Heart left ventricle (tissue), 16 donors: ENCODE measurements at regions of chr5 and their contacts with region 1.

Region 1: DNA sequence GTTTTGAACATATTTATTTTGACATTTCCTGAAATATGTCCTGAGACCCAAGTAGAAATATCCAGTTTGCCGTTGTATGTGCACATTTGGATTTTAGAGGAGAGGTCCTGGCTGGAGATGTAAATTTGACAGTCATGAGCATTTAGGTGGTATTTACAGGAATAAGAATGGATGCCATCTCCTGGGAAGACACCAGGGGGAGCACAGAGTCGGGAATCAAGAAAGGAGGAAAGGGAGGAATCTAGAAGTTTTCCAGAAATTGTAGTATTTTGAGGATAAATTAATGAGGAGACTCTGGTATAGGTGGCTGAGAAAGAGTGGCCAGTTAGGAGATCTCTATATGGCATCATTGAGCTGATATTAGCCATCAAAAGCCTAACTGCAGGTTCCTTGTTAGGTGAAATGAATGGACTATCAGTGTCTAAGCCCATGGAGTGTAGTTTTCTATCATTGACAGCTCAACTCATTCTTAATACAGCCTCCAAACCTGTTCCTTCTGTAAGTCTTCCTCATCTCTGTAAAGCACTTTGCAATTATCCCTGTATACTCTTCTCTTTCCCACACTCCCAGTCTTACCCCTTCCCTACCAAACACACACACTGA is 7.2 kb downstream of the GAPT start:
- DNase-seq: peak in 1 of 5 donors; percentile 8
- ATAC-seq: peak in 1 of 4 donors; percentile 28
- H3K4me3 ChIP-seq: no peak overlapping the region
- H3K27ac ChIP-seq: no peak overlapping the region
- H3K4me1 ChIP-seq: peaks cover 0 to 14% (median 0%) of the 10 kb centered on the region in 12 donors
- H3K27me3 ChIP-seq: peaks cover 0 to 7% (median 0%) of the 10 kb centered on the region in 9 donors
- CTCF ChIP-seq: peak; percentile 45 to 81 (median 74)
- POLR2A ChIP-seq: no peak

Region 2: GRCh38 chr5:58346014-58346413 is 152.4 kb before region 1 on chr5:
- intact Hi-C with region 1: no loop called
- DNase-seq: no peak
- ATAC-seq: no peak
- H3K4me3 ChIP-seq: no peak overlapping the region
- H3K27ac ChIP-seq: no peak overlapping the region
- H3K4me1 ChIP-seq: no peaks in the 10 kb centered on the region
- H3K27me3 ChIP-seq: no peaks in the 10 kb centered on the region
- CTCF ChIP-seq: no peak
- POLR2A ChIP-seq: no peak

Region 3: DNA sequence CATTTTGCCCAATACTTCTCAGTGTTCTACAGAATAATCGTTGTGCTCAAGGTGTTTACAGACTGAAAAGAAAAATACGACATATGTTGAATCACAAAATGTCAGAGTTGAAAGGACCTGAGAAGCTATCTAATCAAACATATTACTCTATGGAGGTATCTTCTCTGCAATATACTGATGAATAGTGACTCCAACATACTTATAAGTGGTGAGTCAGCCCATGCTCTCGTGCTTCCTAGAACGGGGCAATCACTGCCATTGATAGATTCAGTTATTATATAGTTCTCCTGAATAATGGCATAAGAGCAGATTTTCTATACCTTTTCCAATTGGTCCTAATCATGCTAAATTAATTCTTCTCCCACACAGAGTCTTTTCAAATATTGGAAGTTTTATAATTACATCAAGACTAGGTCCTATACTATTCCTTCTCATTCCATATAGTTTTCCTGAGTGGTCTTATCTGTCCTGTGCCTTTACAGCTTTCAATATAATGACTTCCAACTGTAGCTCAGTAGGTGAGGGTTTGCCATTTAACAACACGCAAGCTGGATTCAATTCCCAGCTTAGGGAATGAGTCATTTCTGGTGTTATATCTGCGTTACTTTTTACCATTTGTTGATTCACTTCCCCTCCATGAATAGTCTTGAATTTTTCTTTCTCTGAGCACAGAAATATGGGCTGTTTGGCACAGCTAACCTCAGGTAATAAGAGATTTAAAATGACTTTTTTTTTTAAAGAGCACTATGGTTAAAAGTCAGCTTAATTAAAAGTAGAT is 119.6 kb before region 1 on chr5:
- intact Hi-C with region 1: no loop called
- DNase-seq: no peak
- ATAC-seq: no peak
- H3K4me3 ChIP-seq: no peak overlapping the region
- H3K27ac ChIP-seq: no peak overlapping the region
- H3K4me1 ChIP-seq: peaks cover 0 to 3% (median 0%) of the 10 kb centered on the region in 12 donors
- H3K27me3 ChIP-seq: no peaks in the 10 kb centered on the region
- CTCF ChIP-seq: no peak
- POLR2A ChIP-seq: no peak

Region 4: GRCh38 chr5:58717303-58718007 is 219.0 kb after region 1 on chr5:
- intact Hi-C with region 1: loop called in 4 of 10 experiments (anchors 5 to 10 kb)
- DNase-seq: no peak
- ATAC-seq: no peak
- H3K4me3 ChIP-seq: no peak overlapping the region
- H3K27ac ChIP-seq: no peak overlapping the region
- H3K4me1 ChIP-seq: peaks cover 0 to 5% (median 0%) of the 10 kb centered on the region in 12 donors
- H3K27me3 ChIP-seq: no peaks in the 10 kb centered on the region
- CTCF ChIP-seq: peak in 2 of 12 donors; percentile 9 to 21
- POLR2A ChIP-seq: no peak

Region 5: DNA sequence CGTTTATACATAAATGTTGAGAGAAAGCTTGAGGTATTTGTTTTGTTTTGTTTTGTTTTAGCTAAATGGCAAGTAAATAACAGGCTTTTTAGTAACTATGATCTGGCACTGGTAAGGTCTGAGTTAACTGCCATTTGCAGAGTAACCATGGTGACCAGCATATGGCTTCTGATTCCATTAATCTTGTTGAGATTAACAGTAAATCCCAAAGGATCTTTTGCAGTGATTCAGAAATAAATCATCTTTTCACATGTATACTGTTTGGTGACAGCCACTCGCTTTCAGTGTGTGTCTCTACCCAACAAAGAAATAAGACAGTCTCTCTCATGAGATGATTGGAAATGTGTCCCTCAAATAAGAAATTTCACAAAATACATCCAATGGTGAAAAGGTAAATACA is 320.0 kb after region 1 on chr5:
- intact Hi-C with region 1: loop called in 2 of 10 experiments (anchors 10 kb)
- DNase-seq: no peak
- ATAC-seq: no peak
- H3K4me3 ChIP-seq: no peak overlapping the region
- H3K27ac ChIP-seq: no peak overlapping the region
- H3K4me1 ChIP-seq: no peaks in the 10 kb centered on the region
- H3K27me3 ChIP-seq: no peaks in the 10 kb centered on the region
- CTCF ChIP-seq: no peak
- POLR2A ChIP-seq: no peak

Region 6: GRCh38 chr5:58849921-58850667 is 351.7 kb after region 1 on chr5:
- intact Hi-C with region 1: loop called (anchors 1 to 5 kb)
- DNase-seq: no peak
- ATAC-seq: peak in 3 of 4 donors; percentile 50 to 61 (median 57)
- H3K4me3 ChIP-seq: no peak overlapping the region
- H3K27ac ChIP-seq: no peak overlapping the region
- H3K4me1 ChIP-seq: no peaks in the 10 kb centered on the region
- H3K27me3 ChIP-seq: peaks cover 0 to 3% (median 0%) of the 10 kb centered on the region in 9 donors
- CTCF ChIP-seq: peak; percentile 37 to 64 (median 52)
- POLR2A ChIP-seq: no peak

Region 7: GRCh38 chr5:58921159-58921558 is 422.7 kb after region 1 on chr5:
- intact Hi-C with region 1: no loop called
- DNase-seq: no peak
- ATAC-seq: no peak
- H3K4me3 ChIP-seq: no peak overlapping the region
- H3K27ac ChIP-seq: peak overlapping the region in 3 of 12 donors; percentile 4 to 84 (median 35)
- H3K4me1 ChIP-seq: peaks cover 0 to 28% (median 2%) of the 10 kb centered on the region in 12 donors
- H3K27me3 ChIP-seq: no peaks in the 10 kb centered on the region
- CTCF ChIP-seq: no peak
- POLR2A ChIP-seq: no peak